ENCODE measurements at regions of chr20 and their contacts with region 1.

Region 1: DNA sequence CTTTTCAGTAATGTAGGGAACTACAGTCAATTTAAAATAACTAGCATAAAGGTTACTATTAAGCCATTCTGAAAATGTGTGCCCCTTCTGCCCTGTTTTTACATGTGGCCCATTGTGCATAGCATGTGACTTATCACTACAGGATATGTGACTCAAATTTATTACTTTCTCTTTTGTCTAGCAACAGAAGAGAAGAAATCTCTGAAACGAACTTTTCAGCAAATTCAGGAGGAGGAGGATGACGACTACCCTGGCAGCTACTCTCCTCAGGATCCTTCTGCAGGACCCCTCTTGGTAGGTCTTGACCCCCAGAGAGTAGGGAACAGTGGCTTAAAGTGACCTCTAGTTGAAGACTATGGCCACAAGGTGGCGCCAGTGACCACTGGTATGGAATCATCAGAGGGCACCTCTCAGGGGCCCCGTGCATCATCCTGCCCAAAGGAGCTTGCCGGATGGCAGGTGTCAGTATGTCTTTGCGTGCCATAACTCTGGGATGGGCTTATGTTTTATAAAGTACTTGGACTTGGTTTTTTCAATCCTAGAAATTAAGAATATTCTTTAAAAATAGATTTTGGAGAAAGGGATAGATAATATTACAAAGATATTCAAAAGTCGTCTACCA is 23.9 kb downstream of the RPRD1B start:
- DNase-seq: peak; percentile 78
- H3K4me3 Mint-ChIP-seq: no peak overlapping the region
- H3K27ac Mint-ChIP-seq: peak overlapping the region; percentile 68
- H3K4me1 Mint-ChIP-seq: peaks cover 37% of the 10 kb centered on the region
- H3K27me3 Mint-ChIP-seq: no peaks in the 10 kb centered on the region

Region 2: DNA sequence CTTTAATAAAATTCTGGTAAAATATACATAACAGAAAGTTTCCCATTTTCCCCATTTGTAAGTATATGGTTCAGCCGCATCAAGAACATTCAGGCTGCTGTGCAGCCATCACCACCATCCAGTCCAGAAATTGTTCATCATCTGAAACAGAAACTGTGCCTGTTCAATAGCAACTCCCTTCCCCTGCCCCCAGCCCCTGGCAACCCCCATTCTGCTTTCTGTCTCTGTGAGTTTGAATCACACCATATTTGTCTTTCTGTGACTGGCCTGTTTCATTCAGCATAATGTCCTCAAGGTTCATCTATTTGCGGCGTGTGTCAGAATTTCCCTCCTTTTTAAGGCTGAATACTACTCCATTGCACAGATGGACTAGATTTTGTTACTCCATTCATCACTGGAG is 135.4 kb before region 1 on chr20:
- CTCF ChIA-PET with region 1: no interaction called
- POLR2A ChIA-PET with region 1: no interaction called
- intact Hi-C with region 1: loop called (anchors 10 kb)
- DNase-seq: peak; percentile 81
- H3K4me3 Mint-ChIP-seq: no peak overlapping the region
- H3K27ac Mint-ChIP-seq: no peak overlapping the region
- H3K4me1 Mint-ChIP-seq: peaks cover 19% of the 10 kb centered on the region
- H3K27me3 Mint-ChIP-seq: peaks cover 28% of the 10 kb centered on the region

Region 3: GRCh38 chr20:38043512-38044300 is 13.8 kb before region 1 on chr20:
- CTCF ChIA-PET with region 1: interaction called, 11 read pairs
- POLR2A ChIA-PET with region 1: interaction called, 4 read pairs
- intact Hi-C with region 1: no loop called
- DNase-seq: peak; percentile 46
- H3K4me3 Mint-ChIP-seq: no peak overlapping the region
- H3K27ac Mint-ChIP-seq: no peak overlapping the region
- H3K4me1 Mint-ChIP-seq: peaks cover 46% of the 10 kb centered on the region
- H3K27me3 Mint-ChIP-seq: no peaks in the 10 kb centered on the region

Region 4: GRCh38 chr20:38073307-38074071 is 16.0 kb after region 1 on chr20:
- CTCF ChIA-PET with region 1: interaction called, 28 read pairs
- POLR2A ChIA-PET with region 1: interaction called, 4 read pairs
- intact Hi-C with region 1: no loop called
- DNase-seq: peak; percentile 22
- H3K4me3 Mint-ChIP-seq: no peak overlapping the region
- H3K27ac Mint-ChIP-seq: peak overlapping the region; percentile 2
- H3K4me1 Mint-ChIP-seq: peaks cover 16% of the 10 kb centered on the region
- H3K27me3 Mint-ChIP-seq: no peaks in the 10 kb centered on the region

Region 5: DNA sequence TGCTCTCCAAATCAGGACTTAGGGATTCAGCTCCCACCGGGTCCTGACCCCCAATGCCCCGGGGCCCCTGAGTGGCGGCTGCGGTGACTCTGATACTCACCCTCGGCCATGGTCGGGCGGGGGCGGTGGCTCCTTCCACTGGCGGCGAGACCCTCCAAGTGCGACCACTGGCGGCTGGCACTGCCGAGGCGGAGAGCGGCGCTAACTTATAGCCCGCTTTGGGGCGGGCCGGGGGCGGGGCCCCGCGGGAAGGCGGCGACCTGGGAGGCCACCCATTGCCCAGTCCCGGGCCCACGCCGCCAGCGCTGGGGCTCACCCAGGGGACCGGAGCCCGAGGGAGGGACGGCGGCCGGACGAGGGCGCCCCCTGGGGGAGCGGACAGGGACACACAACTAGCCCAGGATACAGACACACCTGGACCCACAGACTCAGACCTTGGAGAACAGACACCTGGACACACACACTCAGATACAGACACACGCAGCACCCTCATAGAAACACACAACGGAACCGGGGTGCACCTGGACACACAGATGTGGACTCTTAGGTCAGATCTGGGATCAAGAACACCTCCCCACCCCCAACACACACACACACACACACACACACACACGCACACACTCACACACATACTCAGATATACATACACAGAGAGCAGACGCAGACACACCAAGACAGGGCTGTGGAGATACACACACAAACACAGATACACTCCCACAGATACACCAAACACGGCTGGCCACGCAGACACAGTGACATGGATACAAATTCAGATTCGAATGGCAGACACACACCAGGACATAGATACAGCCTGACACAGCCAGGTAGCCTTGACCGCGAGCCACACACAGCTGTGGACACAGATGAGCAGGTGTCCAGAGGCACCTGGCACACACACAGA is 107.9 kb after region 1 on chr20 and contains the start of gene TGM2:
- CTCF ChIA-PET with region 1: interaction called, 14 read pairs
- POLR2A ChIA-PET with region 1: no interaction called
- intact Hi-C with region 1: loop called (anchors 1 kb)
- DNase-seq: peak; percentile 67
- H3K4me3 Mint-ChIP-seq: no peak within 1 kb of the TSS
- H3K27ac Mint-ChIP-seq: no peak within 1 kb of the TSS
- H3K4me1 Mint-ChIP-seq: peaks cover 5% of the 10 kb centered on the region
- H3K27me3 Mint-ChIP-seq: peaks cover 24% of the 10 kb centered on the region
- total RNA-seq, gene TGM2: not detected

Region 6: DNA sequence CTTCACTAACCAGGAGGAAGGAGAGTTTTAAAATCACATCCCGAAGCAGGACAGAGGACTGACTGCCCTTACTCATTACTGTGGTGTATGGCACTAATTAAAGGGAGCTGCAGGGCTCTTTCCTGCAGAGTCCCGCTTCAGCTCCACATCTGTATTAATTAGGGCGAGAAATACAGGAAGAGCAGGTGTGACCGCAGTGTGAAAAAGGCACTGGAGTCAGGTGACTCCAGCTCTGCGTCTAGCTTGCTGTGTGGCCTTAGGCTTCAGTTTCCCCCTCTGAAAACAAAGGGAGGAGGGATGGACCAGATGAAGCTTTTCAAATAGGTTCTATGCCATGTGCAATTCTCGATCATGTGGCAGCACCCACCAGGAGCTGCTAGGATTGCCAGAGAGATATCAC is 169.1 kb after region 1 on chr20:
- CTCF ChIA-PET with region 1: interaction called, 42 read pairs
- POLR2A ChIA-PET with region 1: no interaction called
- intact Hi-C with region 1: loop called (anchors 1 kb)
- DNase-seq: no peak
- H3K4me3 Mint-ChIP-seq: no peak overlapping the region
- H3K27ac Mint-ChIP-seq: no peak overlapping the region
- H3K4me1 Mint-ChIP-seq: no peaks in the 10 kb centered on the region
- H3K27me3 Mint-ChIP-seq: peaks cover 5% of the 10 kb centered on the region